WTC11 (cell line): ENCODE measurements at regions of chr14 and their contacts with region 1.

Region 1: GRCh38 chr14:50321009-50321660 is 9.0 kb downstream of the DMAC2L start:
- DNase-seq: peak; percentile 47
- ATAC-seq: peak; percentile 98
- H3K4me3 Mint-ChIP-seq: no peak overlapping the region
- H3K27ac Mint-ChIP-seq: no peak overlapping the region
- H3K4me1 Mint-ChIP-seq: 0 out of 2 replicates have a peak, but pooled peaks cover 3% of the 10 kb centered on the region
- H3K27me3 Mint-ChIP-seq: no peaks in the 10 kb centered on the region
- CTCF ChIP-seq: peak; percentile 41

Region 2: GRCh38 chr14:50290306-50290705 is 30.8 kb before region 1 on chr14:
- CTCF ChIA-PET with region 1: interaction called, 10 read pairs
- POLR2A ChIA-PET with region 1: no interaction called
- DNase-seq: no peak
- ATAC-seq: no peak
- H3K4me3 Mint-ChIP-seq: no peak overlapping the region
- H3K27ac Mint-ChIP-seq: peak overlapping the region; percentile 31; the same call in 1 of the 2 replicates
- H3K4me1 Mint-ChIP-seq: no peaks in the 10 kb centered on the region
- H3K27me3 Mint-ChIP-seq: no peaks in the 10 kb centered on the region
- CTCF ChIP-seq: no peak

Region 3: DNA sequence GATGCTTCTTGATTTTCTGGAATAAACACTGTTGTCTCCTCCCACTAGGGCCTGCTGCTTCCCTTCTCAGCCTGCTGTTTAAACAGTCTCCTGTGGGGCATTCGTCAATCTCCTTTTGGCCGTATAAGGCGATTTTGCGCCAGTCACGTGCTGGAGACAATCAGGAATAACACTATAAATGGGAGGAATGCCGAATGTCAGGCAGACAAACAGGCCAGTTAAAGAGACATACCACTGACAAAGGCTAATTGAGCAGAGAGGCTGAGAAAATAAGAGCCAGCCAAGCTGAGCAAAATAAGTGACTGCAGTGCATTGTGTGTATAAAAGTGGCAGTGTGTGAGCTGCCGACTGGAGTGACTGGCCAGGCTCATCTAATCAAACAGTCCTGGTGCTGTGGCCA is 14.3 kb after region 1 on chr14:
- CTCF ChIA-PET with region 1: interaction called, 24 read pairs
- POLR2A ChIA-PET with region 1: no interaction called
- DNase-seq: peak; percentile 33
- ATAC-seq: peak; percentile 89
- H3K4me3 Mint-ChIP-seq: no peak overlapping the region
- H3K27ac Mint-ChIP-seq: peak overlapping the region; percentile 91
- H3K4me1 Mint-ChIP-seq: peaks cover 29% of the 10 kb centered on the region
- H3K27me3 Mint-ChIP-seq: no peaks in the 10 kb centered on the region
- CTCF ChIP-seq: no peak

Region 4: DNA sequence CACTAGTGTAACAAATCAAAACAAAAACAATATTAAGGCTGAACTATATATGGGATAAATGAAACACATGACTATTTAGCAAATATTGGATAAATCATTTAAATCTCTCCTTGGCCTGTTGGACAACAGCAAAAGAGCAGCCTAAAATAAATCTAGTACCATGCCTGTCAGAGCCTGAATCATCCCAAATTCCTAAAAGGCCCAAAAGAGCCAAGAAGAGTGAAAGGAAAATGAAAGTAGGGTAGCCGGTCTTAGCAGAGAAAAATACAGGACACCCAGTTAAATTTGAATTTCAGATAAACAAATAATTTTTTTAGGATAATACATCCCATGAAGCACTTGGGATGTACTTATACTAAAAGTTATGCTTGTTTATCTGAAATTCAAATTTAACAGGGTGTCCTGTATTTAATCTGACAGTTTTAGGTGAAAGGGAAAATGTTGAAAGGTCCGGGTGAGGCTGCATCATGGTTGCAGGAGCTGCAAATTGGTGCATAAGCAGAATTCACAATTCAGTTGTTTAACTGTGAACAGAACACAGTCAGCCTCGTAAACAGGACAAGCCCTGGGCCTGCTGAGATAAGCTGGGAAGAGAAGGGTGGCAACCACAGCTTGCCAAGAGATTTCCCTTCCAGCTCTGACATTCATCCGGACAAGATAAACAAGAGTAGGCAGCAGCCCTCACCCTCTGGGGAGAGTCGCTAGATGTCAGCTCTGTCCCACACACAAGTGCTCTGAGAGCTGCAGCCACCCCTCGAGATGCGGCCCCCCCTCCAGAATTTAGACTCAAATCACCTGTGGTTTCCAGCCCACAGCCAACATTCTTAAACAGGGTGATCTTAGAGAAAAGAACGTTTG is 21.3 kb after region 1 on chr14:
- CTCF ChIA-PET with region 1: interaction called, 24 read pairs
- POLR2A ChIA-PET with region 1: no interaction called
- DNase-seq: peak; percentile 50
- ATAC-seq: peak; percentile 82
- H3K4me3 Mint-ChIP-seq: no peak overlapping the region
- H3K27ac Mint-ChIP-seq: peak overlapping the region; percentile 54; the same call in 1 of the 2 replicates
- H3K4me1 Mint-ChIP-seq: peaks cover 11% of the 10 kb centered on the region
- H3K27me3 Mint-ChIP-seq: no peaks in the 10 kb centered on the region
- CTCF ChIP-seq: no peak

Region 5: DNA sequence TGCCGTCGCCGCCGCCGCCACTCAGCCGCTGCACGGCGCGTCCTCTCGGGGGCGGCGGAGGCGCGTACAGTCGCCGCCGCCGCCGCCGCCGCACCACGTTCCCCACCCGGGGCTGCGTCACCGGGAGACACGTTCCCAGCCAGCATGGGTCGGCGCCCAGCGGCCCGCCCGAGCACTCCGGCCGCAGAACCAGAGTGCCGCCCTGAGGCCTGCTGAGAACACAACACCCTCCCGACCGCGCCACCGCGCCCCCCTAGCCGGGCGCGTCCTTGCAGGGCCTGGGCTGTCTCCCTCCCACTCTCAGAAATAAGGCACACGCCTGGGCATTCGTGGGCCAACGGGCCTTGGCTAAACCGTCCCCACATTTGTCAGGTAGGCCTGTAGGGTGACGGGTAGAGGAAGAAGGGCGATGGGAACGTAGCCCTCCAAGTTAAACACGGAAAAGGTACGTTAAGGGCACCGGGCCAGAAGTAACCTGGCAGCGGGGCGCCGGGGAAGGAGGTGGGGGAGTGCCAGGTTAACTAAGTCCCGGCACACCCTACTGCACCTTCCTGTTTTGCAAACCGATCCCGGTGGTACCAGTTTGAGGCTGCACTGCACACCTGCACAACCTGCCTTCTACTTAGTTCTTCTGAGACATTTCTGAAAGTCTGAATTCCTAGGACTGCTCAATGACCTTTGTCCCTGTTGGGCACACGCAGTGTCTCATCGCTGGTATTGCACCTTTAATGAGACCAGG is 211.5 kb after region 1 on chr14 and contains the start of gene MAP4K5:
- CTCF ChIA-PET with region 1: interaction called, 19 read pairs
- POLR2A ChIA-PET with region 1: no interaction called
- DNase-seq: peak; percentile 87
- ATAC-seq: peak; percentile 93
- H3K4me3 Mint-ChIP-seq: peak within 1 kb of the TSS; percentile 87
- H3K27ac Mint-ChIP-seq: peak within 1 kb of the TSS; percentile 77
- H3K4me1 Mint-ChIP-seq: peaks cover 36% of the 10 kb centered on the region
- H3K27me3 Mint-ChIP-seq: no peaks in the 10 kb centered on the region; the same call in 1 of the 2 replicates
- CTCF ChIP-seq: peak; percentile 52
- total RNA-seq, gene MAP4K5: 42.8 to 48.8 TPM (median 46.7 TPM) in 3 replicates

Region 6: GRCh38 chr14:50559990-50560930 is 239.1 kb after region 1 on chr14 and contains the start of gene ATL1:
- CTCF ChIA-PET with region 1: no interaction called
- POLR2A ChIA-PET with region 1: no interaction called
- DNase-seq: peak; percentile 81
- ATAC-seq: peak; percentile 95
- H3K4me3 Mint-ChIP-seq: peak within 1 kb of the TSS; percentile 86
- H3K27ac Mint-ChIP-seq: no peak within 1 kb of the TSS
- H3K4me1 Mint-ChIP-seq: peaks cover 13% of the 10 kb centered on the region
- H3K27me3 Mint-ChIP-seq: peaks cover 46% of the 10 kb centered on the region
- CTCF ChIP-seq: no peak
- total RNA-seq, gene ATL1: 3.4 to 3.7 TPM (median 3.5 TPM) in 3 replicates